ENCODE measurements at regions of chr15 and their contacts with region 1.

Region 1: GRCh38 chr15:63504247-63504978 is at the start of gene USP3:
- DNase-seq: peak; percentile 98
- ATAC-seq: peak; percentile 93
- total RNA-seq, gene USP3: 13.7 TPM

Region 2: DNA sequence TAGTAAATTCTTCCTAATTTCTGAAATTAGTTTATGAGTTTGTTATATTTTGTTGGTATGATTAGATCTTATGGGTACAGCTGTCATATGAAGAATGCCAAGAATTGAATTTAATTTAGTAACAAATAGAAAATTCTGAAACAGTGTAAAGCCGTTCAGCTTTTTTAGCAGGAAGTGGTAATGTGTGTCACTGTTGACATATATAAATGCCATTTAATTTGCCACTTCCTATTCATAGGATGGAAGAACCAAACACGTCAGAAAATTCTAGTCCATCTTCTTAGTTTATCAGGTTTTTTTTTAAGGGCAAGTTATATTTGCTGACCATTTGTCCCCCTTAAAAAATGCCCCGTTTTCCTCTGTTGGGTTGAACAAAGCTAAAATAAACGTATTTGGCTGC is 272.0 kb before region 1 on chr15:
- intact Hi-C with region 1: no loop called
- DNase-seq: no peak
- ATAC-seq: no peak

Region 3: GRCh38 chr15:63544258-63545026 is 40.0 kb after region 1 on chr15:
- intact Hi-C with region 1: loop called (anchors 5 kb)
- DNase-seq: no peak
- ATAC-seq: no peak

Measured in Right ventricle myocardium inferior (tissue), 1 donor.